PC-9 (cell line): ENCODE measurements at regions of chr5 and their contacts with region 1.

Region 1: DNA sequence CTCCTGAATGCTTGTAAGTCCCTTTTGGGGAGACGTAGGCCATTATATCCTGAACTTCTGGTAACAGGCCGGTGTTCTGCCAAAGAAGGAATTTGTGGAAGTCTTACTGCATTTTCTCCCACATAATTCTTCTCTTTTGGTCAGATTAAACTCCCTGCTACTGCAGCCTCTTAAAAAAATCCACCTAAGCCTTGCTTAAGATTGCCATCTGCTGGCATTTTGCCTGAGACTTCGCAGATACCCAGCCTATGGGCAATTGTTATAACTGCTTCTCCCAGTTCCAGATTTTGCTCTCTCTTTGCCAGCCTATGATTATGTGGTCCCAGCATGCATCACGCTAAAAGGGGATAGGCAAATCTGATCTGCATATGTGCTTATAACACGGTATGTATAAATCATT is 391.6 kb upstream of the CHD1 start:
- DNase-seq: peak in 1 of 2 experiments; percentile 3
- H3K4me3 ChIP-seq: no peak overlapping the region
- H3K27ac ChIP-seq: no peak overlapping the region
- H3K4me1 ChIP-seq: no peaks in the 10 kb centered on the region
- H3K27me3 ChIP-seq: no peaks in the 10 kb centered on the region
- CTCF ChIP-seq: no peak

Region 2: GRCh38 chr5:99285606-99286005 is 34.8 kb before region 1 on chr5:
- CTCF ChIA-PET with region 1: no interaction called
- POLR2A ChIA-PET with region 1: no interaction called
- intact Hi-C with region 1: loop called (anchors 1 kb)
- DNase-seq: no peak
- H3K4me3 ChIP-seq: no peak overlapping the region
- H3K27ac ChIP-seq: no peak overlapping the region
- H3K4me1 ChIP-seq: no peaks in the 10 kb centered on the region
- H3K27me3 ChIP-seq: no peaks in the 10 kb centered on the region
- CTCF ChIP-seq: no peak

Region 3: DNA sequence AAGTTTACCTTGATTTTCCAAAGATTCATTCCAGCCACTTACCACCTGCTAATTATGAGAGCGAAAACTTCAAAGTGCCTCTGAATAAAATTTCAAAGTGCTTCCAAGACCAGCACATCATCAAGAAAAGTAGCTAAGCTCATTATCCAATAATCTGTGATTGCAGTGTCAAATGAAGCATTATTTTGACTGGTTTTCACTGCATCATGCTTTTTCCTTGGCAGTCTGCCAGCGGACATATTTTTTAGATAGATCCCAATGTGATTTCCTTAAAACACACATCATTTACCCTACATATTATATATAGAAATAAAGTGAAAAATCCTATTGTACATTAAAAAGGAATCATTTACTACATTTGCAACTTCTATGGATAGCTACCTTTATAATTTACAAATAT is 706.2 kb after region 1 on chr5:
- CTCF ChIA-PET with region 1: no interaction called
- POLR2A ChIA-PET with region 1: no interaction called
- intact Hi-C with region 1: no loop called
- DNase-seq: no peak
- H3K4me3 ChIP-seq: no peak overlapping the region
- H3K27ac ChIP-seq: no peak overlapping the region
- H3K4me1 ChIP-seq: no peaks in the 10 kb centered on the region
- H3K27me3 ChIP-seq: no peaks in the 10 kb centered on the region
- CTCF ChIP-seq: no peak

Region 4: GRCh38 chr5:100131161-100131560 is 810.7 kb after region 1 on chr5:
- CTCF ChIA-PET with region 1: no interaction called
- POLR2A ChIA-PET with region 1: no interaction called
- intact Hi-C with region 1: no loop called
- DNase-seq: no peak
- H3K4me3 ChIP-seq: no peak overlapping the region
- H3K27ac ChIP-seq: no peak overlapping the region
- H3K4me1 ChIP-seq: no peaks in the 10 kb centered on the region
- H3K27me3 ChIP-seq: no peaks in the 10 kb centered on the region
- CTCF ChIP-seq: no peak